ENCODE measurements at regions of chr20 and their contacts with region 1.

Region 1: DNA sequence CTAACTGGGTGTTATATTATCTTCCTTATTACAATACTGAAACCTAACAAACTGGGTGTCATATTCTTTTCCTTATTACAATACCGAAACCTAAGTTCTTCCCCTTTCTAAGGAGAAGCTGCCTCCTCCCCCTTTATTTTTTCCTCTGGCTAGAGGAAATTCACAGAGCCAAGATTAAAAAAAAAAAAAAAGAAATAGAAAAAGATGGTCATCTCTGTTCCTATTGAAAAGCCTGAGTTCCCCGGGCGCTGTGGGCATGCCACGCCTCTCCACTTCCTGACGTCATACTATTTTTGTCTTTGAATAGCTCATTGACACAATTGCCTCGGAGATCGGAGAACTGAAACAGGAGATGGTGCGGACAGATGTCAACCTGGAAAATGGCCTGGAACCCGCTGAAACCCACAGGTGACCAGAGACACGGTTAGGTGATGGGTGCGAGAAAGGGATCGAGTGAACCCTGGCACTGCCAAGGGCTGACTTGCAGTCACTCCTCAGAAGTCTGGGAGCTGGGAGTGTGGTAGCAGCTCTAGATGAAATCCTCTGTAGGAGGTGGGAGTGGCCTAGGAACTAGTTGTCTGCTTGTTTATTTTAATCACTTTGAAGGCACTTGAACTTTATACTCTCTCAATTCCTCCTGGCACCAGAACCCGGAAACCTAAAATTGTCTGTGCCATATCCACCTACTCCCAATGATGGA is 82.2 kb upstream of the NAA20 start:
- DNase-seq: peak; percentile 27
- ATAC-seq: peak; percentile 52; the same call in 1 of the 2 replicates
- H3K4me3 ChIP-seq: no peak overlapping the region
- H3K27ac ChIP-seq: peak overlapping the region; percentile 51
- H3K4me1 ChIP-seq: peaks cover 22% of the 10 kb centered on the region
- H3K27me3 ChIP-seq: no peaks in the 10 kb centered on the region
- CTCF ChIP-seq: no peak

Region 2: GRCh38 chr20:19903168-19903811 is 31.7 kb before region 1 on chr20:
- CTCF ChIA-PET with region 1: no interaction called
- POLR2A ChIA-PET with region 1: interaction called, 12 read pairs
- intact Hi-C with region 1: no loop called
- DNase-seq: no peak
- ATAC-seq: no peak
- H3K4me3 ChIP-seq: no peak overlapping the region
- H3K27ac ChIP-seq: no peak overlapping the region
- H3K4me1 ChIP-seq: peaks cover 8% of the 10 kb centered on the region
- H3K27me3 ChIP-seq: no peaks in the 10 kb centered on the region
- CTCF ChIP-seq: no peak

Region 3: GRCh38 chr20:19916531-19917485 is 18.1 kb before region 1 on chr20:
- CTCF ChIA-PET with region 1: no interaction called
- POLR2A ChIA-PET with region 1: interaction called, 10 read pairs
- intact Hi-C with region 1: no loop called
- DNase-seq: no peak
- ATAC-seq: no peak
- H3K4me3 ChIP-seq: no peak overlapping the region
- H3K27ac ChIP-seq: no peak overlapping the region
- H3K4me1 ChIP-seq: peaks cover 23% of the 10 kb centered on the region
- H3K27me3 ChIP-seq: no peaks in the 10 kb centered on the region
- CTCF ChIP-seq: no peak

Region 4: DNA sequence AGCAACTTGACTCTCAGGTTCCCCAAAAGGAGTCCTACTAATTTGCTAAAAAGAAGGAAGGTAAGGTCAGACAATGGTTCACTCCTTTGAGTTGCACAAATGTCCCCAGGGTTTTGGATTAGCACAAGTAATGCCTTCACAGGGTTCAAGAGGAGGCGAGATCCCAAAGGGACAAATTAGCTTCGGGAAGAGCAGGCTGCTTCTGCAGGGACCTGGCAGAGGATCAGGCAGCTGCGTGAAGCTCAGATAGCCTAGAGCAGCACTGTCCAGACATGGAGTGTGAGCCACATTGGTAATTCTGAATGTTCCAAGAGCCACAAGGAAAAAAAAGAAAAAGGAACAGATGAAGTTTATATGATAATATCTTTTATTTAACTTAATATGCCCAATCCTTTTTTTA is 232.8 kb after region 1 on chr20:
- CTCF ChIA-PET with region 1: no interaction called
- POLR2A ChIA-PET with region 1: no interaction called
- intact Hi-C with region 1: no loop called
- DNase-seq: no peak
- ATAC-seq: no peak
- H3K4me3 ChIP-seq: no peak overlapping the region
- H3K27ac ChIP-seq: no peak overlapping the region
- H3K4me1 ChIP-seq: no peaks in the 10 kb centered on the region
- H3K27me3 ChIP-seq: peaks cover 71% of the 10 kb centered on the region
- CTCF ChIP-seq: no peak

Region 5: GRCh38 chr20:21237956-21238799 is 1303.2 kb after region 1 on chr20:
- CTCF ChIA-PET with region 1: no interaction called
- POLR2A ChIA-PET with region 1: no interaction called
- intact Hi-C with region 1: no loop called
- DNase-seq: peak; percentile 67
- ATAC-seq: peak; percentile 70
- H3K4me3 ChIP-seq: no peak overlapping the region
- H3K27ac ChIP-seq: no peak overlapping the region
- H3K4me1 ChIP-seq: peaks cover 11% of the 10 kb centered on the region
- H3K27me3 ChIP-seq: no peaks in the 10 kb centered on the region
- CTCF ChIP-seq: no peak

Measured in PC-3 (cell line).